Posterior cingulate gyrus (tissue), 11 donors: ENCODE measurements at regions of chr3 and their contacts with region 1.

Region 1: GRCh38 chr3:14508961-14509795 is 31.0 kb downstream of the GRIP2 start:
- DNase-seq: peak in 9 of 10 donors; percentile 42 to 94 (median 66)

Region 2: GRCh38 chr3:14497321-14497720 is 11.9 kb before region 1 on chr3:
- intact Hi-C with region 1: no loop called
- DNase-seq: peak in 2 of 10 donors; percentile 34 to 50

Region 3: DNA sequence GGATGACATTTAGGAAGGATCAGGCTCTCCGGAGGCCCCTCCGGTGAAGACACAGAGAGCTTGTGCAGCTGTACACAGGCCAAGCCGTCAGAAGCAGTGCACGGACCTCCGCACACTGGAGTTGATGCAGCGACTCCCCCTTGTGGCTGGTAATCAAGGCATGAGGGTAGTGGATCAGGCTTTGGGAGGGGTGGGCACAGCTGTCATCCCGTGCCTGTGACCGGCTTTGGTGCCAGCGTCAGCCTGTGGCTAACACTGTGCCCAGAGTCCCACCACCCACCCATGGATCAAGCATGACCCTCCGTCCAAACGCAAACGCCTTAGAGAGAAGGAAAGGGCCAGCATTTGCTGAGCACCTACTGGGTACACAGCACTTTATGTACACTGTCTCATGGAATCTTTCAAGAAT is 39.1 kb after region 1 on chr3:
- intact Hi-C with region 1: loop called (anchors 2 kb)
- DNase-seq: peak in 8 of 10 donors; percentile 47 to 93 (median 72)